Ascending aorta (tissue), 2 donors: ENCODE measurements at regions of chr15 and their contacts with region 1.

Region 1: GRCh38 chr15:43105778-43106485 is at the start of gene UBR1:
- DNase-seq: peak; percentile 75 to 94
- H3K4me3 ChIP-seq: peak within 1 kb of the TSS; percentile 68 to 76
- H3K27ac ChIP-seq: peak within 1 kb of the TSS; percentile 82 to 95
- H3K4me1 ChIP-seq: peaks cover 0 to 14% of the 10 kb centered on the region in 2 donors
- H3K27me3 ChIP-seq: no peaks in the 10 kb centered on the region
- CTCF ChIP-seq: no peak
- total RNA-seq, gene UBR1: 8.2 TPM

Region 2: GRCh38 chr15:42920519-42921227 is 185.3 kb before region 1 on chr15 and contains the start of gene TTBK2:
- intact Hi-C with region 1: loop called (anchors 1 kb)
- DNase-seq: peak; percentile 92 to 99
- H3K4me3 ChIP-seq: peak within 1 kb of the TSS; percentile 79 to 94
- H3K27ac ChIP-seq: peak within 1 kb of the TSS; percentile 80 to 91
- H3K4me1 ChIP-seq: peaks cover 0 to 6% of the 10 kb centered on the region in 2 donors
- H3K27me3 ChIP-seq: no peaks in the 10 kb centered on the region
- CTCF ChIP-seq: peak in 1 of 3 experiments; percentile 9
- total RNA-seq, gene TTBK2: 25.3 TPM

Region 3: GRCh38 chr15:43121863-43122262 is 15.9 kb after region 1 on chr15:
- intact Hi-C with region 1: loop called (anchors 1 kb)
- DNase-seq: no peak
- H3K4me3 ChIP-seq: peak overlapping the region in 1 of 2 donors; percentile 66
- H3K27ac ChIP-seq: peak overlapping the region in 1 of 2 donors; percentile 70
- H3K4me1 ChIP-seq: peaks cover 0 to 5% of the 10 kb centered on the region in 2 donors
- H3K27me3 ChIP-seq: no peaks in the 10 kb centered on the region
- CTCF ChIP-seq: no peak

Region 4: DNA sequence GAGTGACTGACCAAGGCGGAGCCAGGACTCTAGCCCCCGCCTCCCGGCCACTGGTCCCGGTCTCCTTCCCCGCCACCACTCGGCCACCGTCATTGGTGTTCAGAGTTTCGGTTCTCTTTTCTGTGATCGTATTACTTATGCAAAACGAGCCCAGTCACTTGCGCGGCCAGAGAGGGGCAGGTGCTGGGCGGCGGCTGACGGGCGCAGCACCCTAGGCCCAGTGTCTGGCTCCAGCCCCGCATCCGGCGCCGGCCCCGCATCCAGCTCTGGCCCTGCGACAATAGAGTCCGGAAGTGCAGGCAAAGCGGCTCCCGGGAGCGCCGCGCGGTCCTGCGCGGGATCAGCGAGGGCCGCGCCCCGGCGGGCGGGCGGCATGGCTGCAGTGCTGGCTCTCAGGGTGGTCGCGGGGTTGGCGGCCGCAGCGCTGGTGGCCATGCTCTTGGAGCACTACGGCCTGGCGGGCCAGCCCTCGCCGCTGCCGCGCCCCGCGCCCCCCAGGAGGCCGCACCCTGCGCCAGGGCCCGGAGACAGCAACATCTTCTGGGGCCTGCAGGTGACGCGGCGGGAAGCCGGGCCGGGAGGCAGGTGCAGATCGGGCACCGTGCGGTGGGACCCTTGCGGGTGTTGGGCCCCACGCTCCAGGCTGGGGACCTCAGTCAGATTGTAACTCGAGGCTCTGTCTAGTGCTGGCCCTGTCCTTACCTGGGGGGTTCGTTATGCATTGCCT is 27.7 kb after region 1 on chr15 and contains the start of gene TMEM62:
- intact Hi-C with region 1: loop called (anchors 1 kb)
- DNase-seq: peak; percentile 50 to 91
- H3K4me3 ChIP-seq: peak within 1 kb of the TSS; percentile 80 to 83
- H3K27ac ChIP-seq: peak within 1 kb of the TSS; percentile 77 to 91
- H3K4me1 ChIP-seq: peaks cover 0 to 2% of the 10 kb centered on the region in 2 donors
- H3K27me3 ChIP-seq: no peaks in the 10 kb centered on the region
- CTCF ChIP-seq: peak in 1 of 3 experiments; percentile 4
- total RNA-seq, gene TMEM62: 9.0 TPM

Region 5: DNA sequence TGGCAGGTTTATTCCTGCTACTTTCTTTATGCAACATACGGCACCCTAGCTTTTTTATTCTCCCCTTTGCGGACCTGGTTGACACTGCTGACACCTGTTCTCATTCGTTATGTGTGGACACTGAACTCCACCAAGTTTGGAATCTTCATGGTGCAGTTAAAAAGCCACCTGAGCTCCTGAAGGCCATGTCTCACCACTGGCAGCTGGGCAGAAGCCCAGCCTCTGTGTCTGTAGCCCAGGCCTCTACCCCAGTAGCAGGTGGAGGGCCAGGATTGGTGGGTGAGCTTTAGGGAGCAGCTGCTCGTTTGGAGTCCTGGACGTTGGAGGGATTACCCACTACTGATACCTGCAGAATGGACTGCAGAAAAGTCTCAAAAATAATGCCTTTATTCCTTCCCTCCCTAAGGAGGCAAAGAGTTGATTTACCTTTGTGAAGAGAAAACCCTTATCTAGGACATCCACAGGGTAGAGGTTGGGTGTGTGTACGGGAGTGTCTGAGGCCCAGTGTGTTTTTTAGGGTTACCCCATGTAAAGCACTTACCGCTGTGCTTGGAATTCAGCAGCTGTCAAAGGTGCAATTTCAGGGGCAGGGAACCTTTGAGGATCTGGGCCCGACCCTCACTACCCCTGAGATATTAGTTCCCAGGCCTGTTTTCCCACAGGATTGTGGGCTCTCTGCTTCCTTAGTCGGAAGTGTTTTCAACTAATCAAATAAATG is 78.6 kb after region 1 on chr15:
- intact Hi-C with region 1: loop called (anchors 5 kb)
- DNase-seq: no peak
- H3K4me3 ChIP-seq: peak overlapping the region; percentile 94 to 95
- H3K27ac ChIP-seq: peak overlapping the region; percentile 96 to 97
- H3K4me1 ChIP-seq: peaks cover 0 to 13% of the 10 kb centered on the region in 2 donors
- H3K27me3 ChIP-seq: no peaks in the 10 kb centered on the region
- CTCF ChIP-seq: no peak

Region 6: GRCh38 chr15:43541785-43542184 is 435.9 kb after region 1 on chr15:
- intact Hi-C with region 1: no loop called
- DNase-seq: no peak
- H3K4me3 ChIP-seq: no peak overlapping the region
- H3K27ac ChIP-seq: no peak overlapping the region
- H3K4me1 ChIP-seq: no peaks in the 10 kb centered on the region
- H3K27me3 ChIP-seq: no peaks in the 10 kb centered on the region
- CTCF ChIP-seq: no peak